ENCODE measurements at regions of chr15 and their contacts with region 1.

Region 1: DNA sequence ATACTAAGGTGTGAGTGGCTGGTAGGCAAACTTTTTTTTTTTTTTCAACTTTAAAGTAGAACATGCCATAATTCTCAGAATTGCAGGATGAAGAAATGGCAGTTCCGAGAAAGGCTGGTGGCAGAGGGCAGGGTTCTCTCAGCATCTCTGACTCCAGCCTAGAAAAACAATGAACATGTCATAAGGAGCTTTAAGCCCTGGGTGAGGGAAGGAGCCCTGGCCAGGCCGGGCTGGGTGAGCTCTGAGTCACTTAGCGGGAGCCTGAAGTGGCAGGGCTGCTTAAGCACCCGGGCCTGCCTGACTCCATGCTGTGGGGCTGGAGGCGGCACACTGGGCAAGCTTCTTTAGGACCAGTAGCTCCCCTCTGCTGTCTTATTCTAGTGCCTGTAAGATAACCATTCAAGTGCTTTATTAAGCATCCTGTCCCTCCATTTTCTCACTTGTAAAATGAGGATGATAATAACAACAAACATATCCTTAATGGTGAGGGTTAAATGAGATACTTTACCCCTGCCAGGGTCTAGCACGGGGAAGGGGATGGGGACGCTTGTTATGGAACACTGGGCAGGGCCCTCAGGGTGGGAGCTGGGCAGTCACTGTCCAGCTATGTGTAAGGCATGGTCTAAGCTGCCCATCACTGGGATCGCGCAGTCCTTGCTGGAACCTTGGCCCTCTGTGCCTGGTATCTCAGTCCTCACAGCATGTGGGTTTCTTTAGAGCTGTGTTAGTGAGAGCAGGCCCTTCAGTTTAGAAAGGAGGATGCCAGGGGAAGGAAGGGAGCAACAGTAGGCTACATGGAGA is 18.4 kb downstream of the SMAD6 start:
- DNase-seq: no peak
- H3K4me3 ChIP-seq: no peak overlapping the region
- CTCF ChIP-seq: no peak

Region 2: GRCh38 chr15:66679657-66680108 is 40.7 kb before region 1 on chr15:
- CTCF ChIA-PET with region 1: no interaction called
- POLR2A ChIA-PET with region 1: no interaction called
- DNase-seq: no peak
- H3K4me3 ChIP-seq: no peak overlapping the region
- CTCF ChIP-seq: no peak

Region 3: GRCh38 chr15:66706225-66706732 is 14.1 kb before region 1 on chr15:
- CTCF ChIA-PET with region 1: interaction called, 16 read pairs
- POLR2A ChIA-PET with region 1: interaction called, 6 read pairs
- DNase-seq: no peak
- H3K4me3 ChIP-seq: peak overlapping the region; percentile 83
- CTCF ChIP-seq: peak; percentile 44

Region 4: DNA sequence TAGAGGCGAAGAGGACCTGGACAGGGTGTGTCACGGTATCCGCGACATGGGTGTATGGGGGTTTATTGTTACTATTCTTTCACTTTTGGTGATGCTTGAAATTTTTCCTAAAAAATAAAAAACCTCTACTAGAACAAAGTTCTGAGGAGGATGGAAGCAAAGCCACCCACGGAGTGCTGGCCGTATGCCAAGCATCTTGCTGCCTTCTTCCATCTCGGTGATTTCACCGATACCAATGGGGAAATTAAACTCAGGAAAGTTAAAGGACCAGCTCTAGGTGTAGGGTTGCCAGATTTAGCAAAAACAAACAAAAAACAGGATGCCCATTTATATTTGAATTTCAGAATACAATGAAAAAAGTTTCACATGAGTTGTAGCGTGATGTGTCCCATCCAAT is 15.5 kb after region 1 on chr15:
- CTCF ChIA-PET with region 1: interaction called, 14 read pairs
- POLR2A ChIA-PET with region 1: no interaction called
- DNase-seq: no peak
- H3K4me3 ChIP-seq: no peak overlapping the region
- CTCF ChIP-seq: no peak

Region 5: GRCh38 chr15:66746231-66746605 is 25.8 kb after region 1 on chr15:
- CTCF ChIA-PET with region 1: no interaction called
- POLR2A ChIA-PET with region 1: no interaction called
- DNase-seq: no peak
- H3K4me3 ChIP-seq: no peak overlapping the region
- CTCF ChIP-seq: no peak